ENCODE measurements at regions of chr7 and their contacts with region 1.

Region 1: DNA sequence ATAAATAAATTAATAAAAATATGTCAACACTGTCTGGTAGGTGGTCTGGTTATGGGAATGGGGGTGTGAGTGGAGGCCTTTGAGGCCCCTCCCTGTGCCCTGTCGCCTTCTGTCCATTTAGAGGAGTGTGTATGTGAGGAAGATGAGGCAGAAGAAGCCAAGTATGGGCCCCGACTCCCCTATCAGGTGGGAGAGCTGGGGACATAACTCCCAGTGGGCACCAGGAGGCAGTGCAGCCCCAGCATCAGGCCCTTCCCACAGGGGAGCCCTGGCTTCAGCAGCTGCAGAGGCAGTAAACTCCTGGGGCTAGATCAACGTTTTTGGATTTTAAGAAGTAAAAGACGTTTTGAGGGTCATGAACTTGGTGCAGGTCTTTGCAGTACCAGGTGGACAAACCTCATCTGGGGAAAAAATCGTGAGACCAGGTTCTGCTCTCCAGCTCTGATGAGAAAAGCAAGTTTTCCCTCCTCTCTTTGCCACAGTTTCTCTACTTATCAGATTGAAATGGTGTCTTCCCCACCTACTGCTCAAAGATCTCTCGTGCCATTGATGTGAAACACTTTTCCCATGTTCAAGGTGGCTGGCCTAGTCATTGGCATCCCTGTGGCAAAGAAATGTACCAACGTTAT is 167.8 kb upstream of the EEPD1 start:
- DNase-seq: peak; percentile 71
- H3K4me3 Mint-ChIP-seq: no peak overlapping the region
- H3K27ac Mint-ChIP-seq: no peak overlapping the region
- H3K4me1 Mint-ChIP-seq: no peaks in the 10 kb centered on the region
- H3K27me3 Mint-ChIP-seq: no peaks in the 10 kb centered on the region
- CTCF ChIP-seq: peak; percentile 94

Region 2: GRCh38 chr7:35714862-35715261 is 270.4 kb before region 1 on chr7:
- CTCF ChIA-PET with region 1: no interaction called
- POLR2A ChIA-PET with region 1: no interaction called
- intact Hi-C with region 1: no loop called
- DNase-seq: no peak
- H3K4me3 Mint-ChIP-seq: no peak overlapping the region
- H3K27ac Mint-ChIP-seq: no peak overlapping the region
- H3K4me1 Mint-ChIP-seq: peaks cover 5% of the 10 kb centered on the region
- H3K27me3 Mint-ChIP-seq: no peaks in the 10 kb centered on the region
- CTCF ChIP-seq: no peak

Region 3: DNA sequence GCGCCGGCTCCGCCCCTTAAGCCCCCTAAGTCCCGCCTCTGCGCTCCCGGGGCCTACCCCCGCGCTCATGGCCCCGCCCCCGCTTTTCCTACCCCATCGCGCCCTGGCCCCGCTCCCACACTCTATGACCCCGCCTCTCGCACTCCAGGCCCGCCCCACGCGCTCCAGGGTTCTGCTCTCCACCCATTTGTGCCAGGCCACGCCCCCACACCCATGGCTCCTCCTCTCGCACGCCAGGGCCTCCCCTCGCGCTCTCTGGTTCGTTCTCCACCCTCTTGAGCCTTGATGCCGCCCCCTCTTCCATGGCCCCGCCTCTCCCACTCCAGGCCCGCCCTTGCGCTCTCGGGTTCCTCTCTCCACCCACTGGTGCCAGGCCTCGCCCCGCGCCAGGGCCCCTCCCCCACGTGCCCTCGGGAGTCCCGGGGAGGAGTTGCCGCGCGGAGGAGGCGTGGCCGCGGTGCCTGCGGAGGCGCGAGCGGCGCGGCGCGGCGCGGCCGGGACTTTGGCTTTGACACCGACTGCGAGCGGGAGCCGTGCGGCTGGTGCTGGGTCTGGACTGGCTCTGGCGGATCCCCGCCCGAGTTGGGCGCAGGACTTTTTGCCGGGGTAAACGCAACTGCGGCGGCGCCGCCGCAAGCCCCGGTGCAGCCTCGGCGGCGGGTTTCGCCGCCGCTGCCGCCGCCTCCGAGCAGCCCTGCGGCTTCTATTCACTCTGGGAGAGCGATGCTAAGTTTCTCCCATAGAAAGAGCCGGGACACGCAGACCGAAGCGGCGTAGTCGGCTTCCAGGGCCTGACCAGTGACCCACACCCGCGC is 167.7 kb after region 1 on chr7 and contains the start of gene EEPD1:
- CTCF ChIA-PET with region 1: interaction called, 5 read pairs
- POLR2A ChIA-PET with region 1: no interaction called
- intact Hi-C with region 1: loop called (anchors 5 kb)
- DNase-seq: peak; percentile 99
- H3K4me3 Mint-ChIP-seq: peak within 1 kb of the TSS; percentile 72
- H3K27ac Mint-ChIP-seq: peak within 1 kb of the TSS; percentile 3
- H3K4me1 Mint-ChIP-seq: no peaks in the 10 kb centered on the region
- H3K27me3 Mint-ChIP-seq: no peaks in the 10 kb centered on the region
- CTCF ChIP-seq: no peak
- total RNA-seq, gene EEPD1: 0.37 and 0.70 TPM in 2 replicates

Region 4: DNA sequence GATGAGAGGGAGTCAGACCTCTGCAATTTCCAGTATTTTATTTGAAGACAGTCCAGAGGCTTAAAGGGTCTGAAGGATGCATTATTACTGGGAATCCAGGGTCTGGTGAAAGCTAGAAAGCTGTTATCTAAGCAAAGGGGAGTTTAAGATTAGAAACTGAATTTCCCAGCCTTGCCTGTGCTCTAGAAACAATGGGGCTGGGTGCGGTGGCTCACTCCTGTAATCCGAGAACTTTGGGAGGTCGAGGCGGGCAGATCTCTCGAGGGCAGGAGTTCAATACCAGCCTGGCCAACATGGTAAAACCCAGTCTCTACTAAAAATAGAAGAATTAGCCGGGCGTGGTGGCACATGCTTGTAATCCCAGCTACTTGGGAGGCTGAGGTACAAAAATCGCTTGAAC is 332.9 kb after region 1 on chr7:
- CTCF ChIA-PET with region 1: interaction called, 62 read pairs
- POLR2A ChIA-PET with region 1: no interaction called
- intact Hi-C with region 1: loop called (anchors 1 kb)
- DNase-seq: no peak
- H3K4me3 Mint-ChIP-seq: no peak overlapping the region
- H3K27ac Mint-ChIP-seq: no peak overlapping the region
- H3K4me1 Mint-ChIP-seq: peaks cover 5% of the 10 kb centered on the region
- H3K27me3 Mint-ChIP-seq: no peaks in the 10 kb centered on the region
- CTCF ChIP-seq: no peak

Region 5: DNA sequence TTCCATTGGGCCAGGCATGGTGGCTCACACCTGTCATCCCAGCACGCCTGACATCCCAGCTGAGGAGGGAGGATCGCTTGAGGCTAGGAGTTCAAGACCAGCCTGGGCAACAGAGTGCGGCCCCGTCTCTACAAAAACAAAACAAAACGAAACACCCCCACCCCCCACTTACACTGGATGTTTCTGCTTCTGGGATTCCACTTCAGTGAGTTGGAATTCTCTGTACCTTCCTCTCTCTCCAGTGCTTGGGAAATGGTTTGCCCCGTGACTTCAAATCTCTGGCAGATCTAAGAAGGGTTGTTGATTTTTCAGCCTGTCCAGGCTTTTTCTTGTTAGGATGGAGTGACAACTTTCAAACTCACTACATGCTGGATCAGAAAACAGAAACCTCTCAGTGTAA is 511.3 kb after region 1 on chr7:
- CTCF ChIA-PET with region 1: no interaction called
- POLR2A ChIA-PET with region 1: no interaction called
- intact Hi-C with region 1: no loop called
- DNase-seq: peak; percentile 17
- H3K4me3 Mint-ChIP-seq: no peak overlapping the region
- H3K27ac Mint-ChIP-seq: peak overlapping the region; percentile 80
- H3K4me1 Mint-ChIP-seq: peaks cover 29% of the 10 kb centered on the region
- H3K27me3 Mint-ChIP-seq: no peaks in the 10 kb centered on the region
- CTCF ChIP-seq: no peak

Measured in MCF 10A (cell line).